CD8-positive, alpha-beta T cell (primary cell): ENCODE measurements at regions of chr9 and their contacts with region 1.

Region 1: GRCh38 chr9:33404788-33405362 is 2.5 kb upstream of the AQP7 start:
- DNase-seq: no peak
- ATAC-seq: no peak
- H3K4me3 ChIP-seq: no peak overlapping the region
- H3K4me3 Mint-ChIP-seq: no peak overlapping the region
- H3K27ac ChIP-seq: no peak overlapping the region
- H3K27ac Mint-ChIP-seq: no peak overlapping the region
- H3K4me1 ChIP-seq: no peaks in the 10 kb centered on the region
- H3K4me1 Mint-ChIP-seq: peaks cover 5% of the 10 kb centered on the region
- H3K27me3 ChIP-seq: no peaks in the 10 kb centered on the region
- H3K27me3 Mint-ChIP-seq: no peaks in the 10 kb centered on the region
- CTCF ChIP-seq: no peak

Region 2: GRCh38 chr9:33434317-33435105 is 29.6 kb after region 1 on chr9:
- CTCF ChIA-PET with region 1: interaction called, 11 read pairs
- POLR2A ChIA-PET with region 1: no interaction called
- intact Hi-C with region 1: no loop called
- DNase-seq: no peak
- ATAC-seq: no peak
- H3K4me3 ChIP-seq: no peak overlapping the region
- H3K4me3 Mint-ChIP-seq: no peak overlapping the region
- H3K27ac ChIP-seq: no peak overlapping the region
- H3K27ac Mint-ChIP-seq: no peak overlapping the region
- H3K4me1 ChIP-seq: no peaks in the 10 kb centered on the region
- H3K4me1 Mint-ChIP-seq: peaks cover 3% of the 10 kb centered on the region
- H3K27me3 ChIP-seq: no peaks in the 10 kb centered on the region
- H3K27me3 Mint-ChIP-seq: no peaks in the 10 kb centered on the region
- CTCF ChIP-seq: no peak

Region 3: GRCh38 chr9:33452828-33453271 is 48.0 kb after region 1 on chr9:
- CTCF ChIA-PET with region 1: interaction called, 26 read pairs
- POLR2A ChIA-PET with region 1: interaction called, 3 read pairs
- intact Hi-C with region 1: no loop called
- DNase-seq: peak in 8 of 9 experiments; percentile 32 to 67 (median 61)
- ATAC-seq: peak; percentile 70
- H3K4me3 ChIP-seq: no peak overlapping the region
- H3K4me3 Mint-ChIP-seq: no peak overlapping the region
- H3K27ac ChIP-seq: peak overlapping the region in 1 of 2 experiments; percentile 4
- H3K27ac Mint-ChIP-seq: peak overlapping the region; percentile 87
- H3K4me1 ChIP-seq: peaks cover 62% of the 10 kb centered on the region
- H3K4me1 Mint-ChIP-seq: peaks cover 62% of the 10 kb centered on the region
- H3K27me3 ChIP-seq: no peaks in the 10 kb centered on the region
- H3K27me3 Mint-ChIP-seq: no peaks in the 10 kb centered on the region
- CTCF ChIP-seq: peak; percentile 56

Region 4: GRCh38 chr9:33473643-33474352 is 68.9 kb after region 1 on chr9 and contains the start of gene NOL6:
- CTCF ChIA-PET with region 1: interaction called, 122 read pairs
- POLR2A ChIA-PET with region 1: no interaction called
- intact Hi-C with region 1: no loop called
- DNase-seq: peak; percentile 97 to 99 (median 98)
- ATAC-seq: peak; percentile 99
- H3K4me3 ChIP-seq: peak within 1 kb of the TSS; percentile 91 to 94
- H3K4me3 Mint-ChIP-seq: peak within 1 kb of the TSS; percentile 99
- H3K27ac ChIP-seq: peak within 1 kb of the TSS; percentile 76 to 80
- H3K27ac Mint-ChIP-seq: peak within 1 kb of the TSS; percentile 96
- H3K4me1 ChIP-seq: peaks cover 22% of the 10 kb centered on the region
- H3K4me1 Mint-ChIP-seq: peaks cover 32% of the 10 kb centered on the region
- H3K27me3 ChIP-seq: no peaks in the 10 kb centered on the region
- H3K27me3 Mint-ChIP-seq: no peaks in the 10 kb centered on the region
- CTCF ChIP-seq: no peak
- total RNA-seq, gene NOL6: 41.8 to 42.3 TPM

Region 5: GRCh38 chr9:33721674-33722358 is 316.9 kb after region 1 on chr9:
- CTCF ChIA-PET with region 1: no interaction called
- POLR2A ChIA-PET with region 1: no interaction called
- intact Hi-C with region 1: loop called in 1 of 2 experiments (anchors 2 kb)
- DNase-seq: peak; percentile 75 to 94 (median 87)
- ATAC-seq: peak; percentile 87
- H3K4me3 ChIP-seq: no peak overlapping the region
- H3K4me3 Mint-ChIP-seq: no peak overlapping the region
- H3K27ac ChIP-seq: no peak overlapping the region
- H3K27ac Mint-ChIP-seq: no peak overlapping the region
- H3K4me1 ChIP-seq: no peaks in the 10 kb centered on the region
- H3K4me1 Mint-ChIP-seq: no peaks in the 10 kb centered on the region
- H3K27me3 ChIP-seq: no peaks in the 10 kb centered on the region
- H3K27me3 Mint-ChIP-seq: peaks cover 15% of the 10 kb centered on the region
- CTCF ChIP-seq: peak; percentile 100